HepG2 (cell line): ENCODE measurements at regions of chr14 and their contacts with region 1.

Region 1: GRCh38 chr14:102437997-102438915 is 71.3 kb downstream of the ANKRD9 start:
- DNase-seq: peak; percentile 59
- ATAC-seq: peak; percentile 75
- H3K4me3 ChIP-seq: no peak overlapping the region
- H3K27ac ChIP-seq: no peak overlapping the region
- H3K4me1 ChIP-seq: peaks cover 29% of the 10 kb centered on the region
- H3K27me3 ChIP-seq: no peaks in the 10 kb centered on the region
- CTCF ChIP-seq: peak; percentile 97
- EP300 ChIP-seq: no peak
- POLR2A ChIP-seq: no peak
- RAD21 ChIP-seq: peak; percentile 99

Region 2: GRCh38 chr14:102497998-102498677 is 59.9 kb after region 1 on chr14:
- CTCF ChIA-PET with region 1: interaction called, 6 read pairs
- POLR2A ChIA-PET with region 1: no interaction called
- in situ Hi-C with region 1: no loop called
- intact Hi-C with region 1: loop called (anchors 1 kb)
- DNase-seq: no peak
- ATAC-seq: peak; percentile 69
- H3K4me3 ChIP-seq: no peak overlapping the region
- H3K27ac ChIP-seq: no peak overlapping the region
- H3K4me1 ChIP-seq: peaks cover 13% of the 10 kb centered on the region
- H3K27me3 ChIP-seq: no peaks in the 10 kb centered on the region
- CTCF ChIP-seq: peak; percentile 71
- EP300 ChIP-seq: no peak
- POLR2A ChIP-seq: no peak
- RAD21 ChIP-seq: peak; percentile 87

Region 3: GRCh38 chr14:102509744-102510615 is 71.7 kb after region 1 on chr14 and contains the start of gene ANKRD9:
- CTCF ChIA-PET with region 1: no interaction called
- POLR2A ChIA-PET with region 1: interaction called, 11 read pairs
- in situ Hi-C with region 1: loop called (anchors 5 kb)
- intact Hi-C with region 1: loop called (anchors 2 kb)
- DNase-seq: peak; percentile 85
- ATAC-seq: peak; percentile 62
- H3K4me3 ChIP-seq: peak within 1 kb of the TSS; percentile 67 to 90 (median 84)
- H3K27ac ChIP-seq: peak within 1 kb of the TSS; percentile 80
- H3K4me1 ChIP-seq: peaks cover 55% of the 10 kb centered on the region
- H3K27me3 ChIP-seq: no peaks in the 10 kb centered on the region; a peak in 2 of 5 replicates
- CTCF ChIP-seq: peak; percentile 38
- EP300 ChIP-seq: no peak
- POLR2A ChIP-seq: no peak; a peak in 2 of 4 replicates
- RAD21 ChIP-seq: peak; percentile 26; the same call in 1 of the 2 replicates
- total RNA-seq, gene ANKRD9: 5.7 and 10.0 TPM in 2 replicates

Region 4: DNA sequence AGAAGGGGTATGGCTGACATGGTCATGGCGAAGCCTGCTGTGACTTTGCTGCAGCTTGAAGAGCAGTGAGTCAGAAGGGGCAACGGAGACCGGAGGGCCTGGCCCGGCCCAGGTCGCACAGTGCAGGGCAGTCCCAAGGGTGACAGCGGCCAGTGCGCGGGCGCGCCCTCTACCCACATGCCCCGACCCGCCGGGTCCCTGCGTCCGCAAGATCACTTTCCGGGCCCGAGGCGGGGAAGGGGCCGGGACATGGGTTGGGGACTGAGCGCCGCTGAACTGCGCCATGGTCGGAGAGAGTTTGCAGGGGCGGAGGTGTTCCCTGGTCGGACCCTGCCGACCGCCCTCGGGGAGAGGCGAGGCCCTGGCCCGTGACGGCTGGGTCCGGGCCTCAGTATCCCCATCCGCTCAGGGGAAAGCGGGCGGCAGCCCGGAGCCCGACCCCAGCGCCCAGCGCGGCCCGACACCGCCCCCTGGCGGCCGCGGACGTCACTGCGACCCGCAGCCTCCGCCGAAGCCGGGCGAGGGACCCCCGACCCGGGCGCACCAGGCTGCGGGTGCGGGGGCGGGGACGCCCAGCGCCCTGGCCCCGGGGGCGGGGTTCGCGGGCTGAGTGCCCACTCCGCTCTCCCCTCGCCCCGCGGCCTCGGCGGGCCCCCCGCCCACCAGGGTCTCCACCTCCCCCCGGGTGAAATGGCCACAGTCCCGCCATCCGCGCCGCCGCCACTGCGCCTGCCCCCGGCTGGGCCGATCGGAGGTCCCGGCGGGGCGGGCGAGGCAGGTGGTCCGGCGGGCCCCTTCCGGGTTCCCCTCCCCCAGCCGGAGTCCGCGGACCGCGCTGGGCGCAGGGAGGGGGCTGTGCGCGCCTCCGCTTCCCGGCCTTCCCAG is 78.5 kb after region 1 on chr14:
- CTCF ChIA-PET with region 1: interaction called, 59 read pairs
- POLR2A ChIA-PET with region 1: interaction called, 4 read pairs
- in situ Hi-C with region 1: loop called (anchors 5 kb)
- intact Hi-C with region 1: loop called (anchors 1 kb)
- DNase-seq: peak; percentile 44
- ATAC-seq: peak; percentile 84
- H3K4me3 ChIP-seq: peak overlapping the region; percentile 53 to 80 (median 59)
- H3K27ac ChIP-seq: no peak overlapping the region
- H3K4me1 ChIP-seq: peaks cover 51% of the 10 kb centered on the region
- H3K27me3 ChIP-seq: no peaks in the 10 kb centered on the region
- CTCF ChIP-seq: peak; percentile 64
- EP300 ChIP-seq: no peak
- POLR2A ChIP-seq: no peak
- RAD21 ChIP-seq: peak; percentile 99